ENCODE measurements at regions of chr1 and their contacts with region 1.

Region 1: GRCh38 chr1:18949686-18950400 is 6.6 kb downstream of the IFFO2 start:
- DNase-seq: no peak
- H3K4me3 Mint-ChIP-seq: peak overlapping the region; percentile 73
- H3K27ac Mint-ChIP-seq: peak overlapping the region; percentile 96
- H3K4me1 Mint-ChIP-seq: peaks cover 92% of the 10 kb centered on the region
- H3K27me3 Mint-ChIP-seq: no peaks in the 10 kb centered on the region

Region 2: GRCh38 chr1:18926315-18927081 is 23.3 kb before region 1 on chr1:
- intact Hi-C with region 1: loop called (anchors 1 kb)
- DNase-seq: peak; percentile 82
- H3K4me3 Mint-ChIP-seq: peak overlapping the region; percentile 83
- H3K27ac Mint-ChIP-seq: peak overlapping the region; percentile 96
- H3K4me1 Mint-ChIP-seq: peaks cover 62% of the 10 kb centered on the region
- H3K27me3 Mint-ChIP-seq: no peaks in the 10 kb centered on the region

Region 3: DNA sequence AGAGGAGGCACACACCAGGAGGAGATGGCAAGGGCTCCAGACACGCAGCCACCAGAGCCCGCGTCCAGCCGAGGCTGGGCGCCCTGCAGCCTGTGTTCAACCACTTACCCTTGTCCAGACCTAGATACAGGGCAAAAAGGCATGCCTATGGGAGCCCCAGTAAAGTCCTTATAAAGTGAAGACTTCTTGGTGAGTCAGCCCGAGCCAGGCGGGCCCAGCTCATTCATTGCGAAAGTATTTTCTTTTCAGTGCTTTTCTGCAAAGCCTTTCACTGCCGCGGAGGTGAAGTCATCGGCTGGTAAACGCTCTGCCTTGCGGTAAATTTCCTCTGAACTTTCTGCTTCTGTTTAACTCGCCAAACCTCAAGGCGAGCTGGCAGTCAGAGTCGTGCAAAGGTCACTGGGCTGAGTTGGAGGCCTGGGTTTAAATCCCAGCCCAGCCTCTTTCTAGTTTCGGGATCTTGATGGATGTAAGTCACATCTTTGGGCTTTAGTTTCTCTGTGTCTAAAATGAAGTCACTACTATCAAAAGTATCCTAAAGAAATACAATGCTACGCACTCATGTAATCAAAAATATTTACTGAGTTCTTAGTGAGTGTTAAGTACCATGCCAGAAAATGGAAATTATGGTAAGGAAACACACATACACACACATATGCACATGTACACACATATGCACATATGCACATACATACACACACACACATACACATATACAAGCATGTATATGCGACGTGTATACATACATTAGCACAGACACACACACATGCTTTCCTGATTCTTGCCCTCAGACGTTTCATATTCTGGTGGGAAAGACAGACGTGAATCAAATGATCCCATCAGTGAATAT is 61.4 kb after region 1 on chr1:
- intact Hi-C with region 1: loop called (anchors 1 kb)
- DNase-seq: peak; percentile 76
- H3K4me3 Mint-ChIP-seq: peak overlapping the region; percentile 9
- H3K27ac Mint-ChIP-seq: peak overlapping the region; percentile 89
- H3K4me1 Mint-ChIP-seq: peaks cover 42% of the 10 kb centered on the region
- H3K27me3 Mint-ChIP-seq: no peaks in the 10 kb centered on the region

Region 4: DNA sequence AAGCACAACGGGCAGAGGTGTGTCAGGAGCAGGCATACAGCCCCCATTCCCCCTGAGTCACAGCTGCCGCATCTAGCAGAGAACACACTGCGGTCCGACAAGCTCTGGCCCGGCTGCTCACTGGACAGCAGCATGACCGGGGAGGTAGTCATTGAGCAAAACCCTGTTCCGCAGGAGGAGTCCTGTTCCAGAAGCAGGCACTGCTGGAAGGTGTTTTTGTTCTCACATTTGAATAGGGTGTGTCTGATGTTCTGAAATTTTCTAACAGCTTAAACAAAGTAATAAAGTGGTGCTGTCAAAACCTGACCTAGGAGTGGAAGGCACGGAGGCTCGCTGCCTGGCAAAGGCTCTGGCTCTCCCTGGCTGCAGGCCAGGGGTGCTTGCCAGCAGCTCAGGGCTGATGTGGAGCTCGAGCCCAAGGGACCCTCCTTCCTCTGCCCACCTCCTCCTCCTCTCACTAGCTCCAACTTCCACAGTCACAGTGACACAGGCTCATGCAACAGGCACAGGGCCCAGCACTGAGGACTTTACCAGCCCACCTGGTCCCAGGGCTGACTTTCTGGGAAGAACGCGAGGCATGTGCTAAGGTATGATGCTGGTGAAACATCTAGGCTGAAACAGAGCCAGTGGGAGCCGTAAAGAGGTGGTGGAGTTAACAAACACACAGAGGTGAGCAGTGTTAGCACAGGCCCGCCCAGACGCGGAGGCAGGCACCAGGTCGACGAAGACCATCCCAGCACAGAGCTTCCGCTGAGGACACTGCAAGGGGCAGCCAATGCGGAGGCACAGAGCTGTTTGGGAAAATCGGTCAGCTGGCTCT is 125.3 kb after region 1 on chr1:
- intact Hi-C with region 1: loop called (anchors 5 kb)
- DNase-seq: no peak
- H3K4me3 Mint-ChIP-seq: peak overlapping the region; percentile 3
- H3K27ac Mint-ChIP-seq: peak overlapping the region; percentile 20
- H3K4me1 Mint-ChIP-seq: peaks cover 25% of the 10 kb centered on the region
- H3K27me3 Mint-ChIP-seq: no peaks in the 10 kb centered on the region